ENCODE measurements at regions of chr14 and their contacts with region 1.

Region 1: DNA sequence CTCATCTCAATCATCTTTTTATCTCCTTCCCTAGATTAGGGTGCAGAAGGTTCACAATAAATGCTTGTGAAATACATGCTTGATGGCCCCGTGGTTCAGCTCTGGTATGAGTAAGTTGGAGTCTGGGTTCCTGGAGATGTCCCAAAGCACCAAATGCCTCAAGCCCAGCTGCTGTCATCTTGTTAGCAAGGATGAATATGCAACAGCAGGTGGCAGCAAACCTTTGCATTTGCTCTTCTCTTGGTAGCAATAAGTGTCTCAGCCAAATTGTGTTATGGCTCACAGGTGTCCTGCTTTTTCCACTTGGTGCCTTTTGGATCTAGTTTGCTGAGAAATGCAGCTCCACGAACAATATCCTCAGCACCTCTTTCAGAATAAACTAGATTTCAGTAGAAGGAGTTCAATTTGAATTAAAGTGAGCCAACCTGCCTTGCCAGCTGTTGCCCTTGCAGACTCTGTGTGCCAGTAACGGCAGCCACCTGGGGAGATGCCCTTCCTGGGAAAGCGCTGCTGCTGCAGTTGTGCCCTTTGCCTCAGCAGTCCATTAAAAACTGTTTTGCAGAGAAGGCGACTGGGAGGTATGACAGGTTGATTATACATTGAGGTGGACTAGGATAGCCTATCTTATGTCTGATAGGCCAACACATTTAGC is 417.3 kb downstream of the SNAPC1 start:
- DNase-seq: peak in 3 of 5 donors; percentile 17 to 51 (median 35)
- ATAC-seq: peak in 3 of 4 donors; percentile 61 to 71 (median 62)
- H3K4me3 ChIP-seq: no peak overlapping the region
- H3K27ac ChIP-seq: no peak overlapping the region
- H3K4me1 ChIP-seq: no peaks in the 10 kb centered on the region
- H3K27me3 ChIP-seq: peaks cover 0 to 13% (median 0%) of the 10 kb centered on the region in 9 donors
- CTCF ChIP-seq: peak; percentile 23 to 63 (median 40)
- POLR2A ChIP-seq: no peak

Region 2: GRCh38 chr14:61973868-61974321 is 205.6 kb before region 1 on chr14:
- intact Hi-C with region 1: no loop called
- DNase-seq: no peak
- ATAC-seq: no peak
- H3K4me3 ChIP-seq: no peak overlapping the region
- H3K27ac ChIP-seq: no peak overlapping the region
- H3K4me1 ChIP-seq: no peaks in the 10 kb centered on the region
- H3K27me3 ChIP-seq: no peaks in the 10 kb centered on the region
- CTCF ChIP-seq: no peak
- POLR2A ChIP-seq: no peak

Region 3: DNA sequence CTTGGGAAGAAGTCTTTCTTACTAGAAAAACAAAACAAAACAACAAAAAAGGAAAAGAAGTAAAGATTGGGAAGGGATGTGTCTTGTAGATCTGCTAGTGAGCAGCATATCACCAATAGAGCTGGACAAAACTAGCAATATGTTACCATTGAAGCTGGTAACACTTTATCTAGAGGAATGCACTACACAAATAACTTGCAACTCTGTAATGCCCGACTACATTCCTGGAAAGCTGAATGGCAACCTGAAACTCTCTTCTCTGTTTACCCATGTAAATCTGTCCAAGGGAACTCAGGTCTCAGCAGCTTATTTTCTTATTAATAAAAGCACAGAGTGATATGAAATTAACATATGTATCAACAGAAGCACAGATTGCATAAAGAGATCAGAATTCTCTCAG is 241.4 kb after region 1 on chr14:
- intact Hi-C with region 1: no loop called
- DNase-seq: no peak
- ATAC-seq: no peak
- H3K4me3 ChIP-seq: no peak overlapping the region
- H3K27ac ChIP-seq: no peak overlapping the region
- H3K4me1 ChIP-seq: no peaks in the 10 kb centered on the region
- H3K27me3 ChIP-seq: no peaks in the 10 kb centered on the region
- CTCF ChIP-seq: no peak
- POLR2A ChIP-seq: no peak

Region 4: DNA sequence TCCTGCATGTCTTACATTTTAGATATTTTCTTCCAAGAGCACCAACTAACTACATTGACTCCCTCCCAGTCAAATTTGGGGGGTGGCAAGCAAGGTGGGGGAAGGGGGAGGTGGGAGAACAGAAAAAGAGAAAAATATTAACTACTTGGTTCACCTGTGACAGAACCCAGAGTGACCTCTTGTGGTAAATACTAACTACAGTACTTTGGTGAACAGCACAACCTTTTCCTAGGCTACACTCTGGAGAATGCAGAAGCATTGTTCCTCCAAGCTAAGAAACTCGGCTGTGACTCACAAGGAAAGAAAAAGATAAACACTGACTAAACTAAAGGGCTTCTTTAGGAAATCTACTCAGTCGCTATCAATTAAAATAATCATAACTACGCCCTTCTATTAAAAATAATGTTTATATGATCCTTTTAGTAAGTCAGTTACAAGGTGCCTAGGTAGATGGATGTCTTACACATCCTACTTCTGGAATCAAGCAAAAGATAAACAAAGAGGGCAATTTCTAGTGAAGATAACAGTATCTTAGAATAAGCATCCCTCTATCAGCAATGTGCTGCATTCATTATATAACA is 860.4 kb after region 1 on chr14:
- intact Hi-C with region 1: loop called in 2 of 10 experiments (anchors 5 to 10 kb)
- DNase-seq: no peak
- ATAC-seq: no peak
- H3K4me3 ChIP-seq: no peak overlapping the region
- H3K27ac ChIP-seq: no peak overlapping the region
- H3K4me1 ChIP-seq: peaks cover 0 to under 1% (median 0%) of the 10 kb centered on the region in 12 donors
- H3K27me3 ChIP-seq: peaks cover 9 to 69% (median 28%) of the 10 kb centered on the region in 9 donors
- CTCF ChIP-seq: peak in 3 of 12 donors; percentile 9 to 21 (median 18)
- POLR2A ChIP-seq: no peak

Region 5: DNA sequence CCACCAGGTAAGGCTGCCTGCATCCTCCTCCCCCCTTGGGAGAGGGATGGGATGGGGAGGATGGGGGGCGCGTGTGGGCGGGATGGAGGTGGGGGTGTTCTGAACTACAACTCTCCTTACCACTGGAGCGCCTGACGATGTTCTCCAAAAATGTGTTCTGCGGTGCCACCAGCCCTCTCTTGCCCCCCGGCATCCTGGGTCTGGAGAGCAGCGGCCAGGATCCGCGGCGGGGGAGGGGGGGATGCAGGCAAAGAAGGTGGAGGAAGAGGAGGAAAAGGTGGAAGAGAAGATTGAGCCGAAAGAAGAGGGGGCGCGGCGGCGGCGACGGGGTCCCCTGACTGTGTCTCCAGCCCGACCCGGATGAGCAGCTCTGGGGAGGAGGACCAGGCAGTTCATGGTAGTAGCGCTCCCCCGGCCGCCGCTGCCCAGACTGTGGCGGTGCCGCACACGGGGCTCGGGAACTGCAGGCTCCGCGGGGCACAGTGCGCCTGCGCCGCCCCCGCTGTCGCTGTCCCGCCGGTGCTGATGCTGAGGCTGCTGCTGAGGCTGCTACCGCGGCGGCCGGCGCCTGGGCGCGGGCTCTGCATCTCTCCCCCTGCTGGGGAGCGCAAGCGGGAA is 865.6 kb after region 1 on chr14 and contains the start of gene KCNH5:
- intact Hi-C with region 1: loop called in 1 of 10 experiments (anchors 5 kb)
- DNase-seq: peak; percentile 10 to 71 (median 25)
- ATAC-seq: peak in 3 of 4 donors; percentile 63 to 90 (median 77)
- H3K4me3 ChIP-seq: peak within 1 kb of the TSS; percentile 1 to 40 (median 20)
- H3K27ac ChIP-seq: no peak within 1 kb of the TSS
- H3K4me1 ChIP-seq: peaks cover 0 to 16% (median 6%) of the 10 kb centered on the region in 12 donors
- H3K27me3 ChIP-seq: peaks cover 18 to 92% (median 50%) of the 10 kb centered on the region in 9 donors
- CTCF ChIP-seq: no peak
- POLR2A ChIP-seq: no peak
- total RNA-seq, gene KCNH5: 0.17 to 0.66 TPM in 2 of 9 donors, not detected in the others

Region 6: GRCh38 chr14:63276492-63277342 is 1097.2 kb after region 1 on chr14:
- intact Hi-C with region 1: loop called in 8 of 10 experiments (anchors 1 to 10 kb)
- DNase-seq: no peak
- ATAC-seq: peak in 1 of 4 donors; percentile 32
- H3K4me3 ChIP-seq: no peak overlapping the region
- H3K27ac ChIP-seq: peak overlapping the region in 1 of 12 donors; percentile 17
- H3K4me1 ChIP-seq: peaks cover 0 to 36% (median 7%) of the 10 kb centered on the region in 12 donors
- H3K27me3 ChIP-seq: no peaks in the 10 kb centered on the region
- CTCF ChIP-seq: peak; percentile 57 to 86 (median 83)
- POLR2A ChIP-seq: no peak